Lower leg skin (tissue), 4 donors: ENCODE measurements at regions of chr10 and their contacts with region 1.

Region 1: DNA sequence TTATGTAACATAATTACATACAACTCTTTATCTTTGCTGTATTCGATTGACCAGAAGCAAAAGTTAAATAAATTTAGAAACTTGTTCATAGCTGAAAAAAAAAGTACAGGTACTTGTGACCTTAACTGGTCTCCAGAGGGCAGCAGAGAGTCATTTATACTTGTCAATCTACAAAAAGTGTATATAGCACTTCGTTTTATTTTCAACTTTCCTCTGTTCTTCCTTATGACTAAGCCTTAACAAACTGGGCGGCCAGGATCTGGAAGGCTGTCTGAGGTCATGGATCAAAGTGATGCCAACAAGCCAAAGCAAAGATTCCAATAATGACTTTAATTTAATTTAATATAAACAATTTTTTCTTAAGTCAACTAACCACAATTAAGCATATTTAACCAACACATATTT is 29.8 kb downstream of the C10orf67 start:
- DNase-seq: peak in 1 of 2 donors; percentile 59
- H3K4me3 ChIP-seq: no peak overlapping the region
- CTCF ChIP-seq: no peak
- POLR2A ChIP-seq: no peak

Region 2: GRCh38 chr10:23270531-23270930 is 44.3 kb before region 1 on chr10:
- intact Hi-C with region 1: no loop called
- DNase-seq: no peak
- H3K4me3 ChIP-seq: no peak overlapping the region
- CTCF ChIP-seq: no peak
- POLR2A ChIP-seq: no peak

Region 3: DNA sequence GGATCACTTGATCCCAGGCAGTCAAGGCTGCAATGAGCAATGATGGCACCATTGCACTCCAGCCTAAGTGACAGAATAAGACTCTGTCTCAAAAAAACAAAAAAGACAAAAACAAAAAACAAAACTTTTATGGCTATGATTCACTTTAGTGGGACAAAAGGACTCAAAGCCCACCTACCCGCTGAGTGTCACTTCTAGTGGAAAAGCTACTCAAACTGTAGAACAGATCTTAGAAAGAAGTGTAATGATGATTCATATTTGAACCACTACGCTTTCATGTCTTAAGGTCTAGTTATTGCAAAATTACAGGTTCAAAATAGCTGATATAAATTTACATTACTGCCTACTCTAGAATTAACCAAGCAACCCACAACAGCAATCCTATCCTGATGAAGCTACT is 77.0 kb after region 1 on chr10:
- intact Hi-C with region 1: no loop called
- DNase-seq: no peak
- H3K4me3 ChIP-seq: no peak overlapping the region
- CTCF ChIP-seq: no peak
- POLR2A ChIP-seq: no peak

Region 4: GRCh38 chr10:23522345-23522744 is 207.5 kb after region 1 on chr10:
- intact Hi-C with region 1: loop called (anchors 5 kb)
- DNase-seq: no peak
- H3K4me3 ChIP-seq: no peak overlapping the region
- CTCF ChIP-seq: no peak
- POLR2A ChIP-seq: no peak